ENCODE measurements at regions of chrX and their contacts with region 1.

Region 1: DNA sequence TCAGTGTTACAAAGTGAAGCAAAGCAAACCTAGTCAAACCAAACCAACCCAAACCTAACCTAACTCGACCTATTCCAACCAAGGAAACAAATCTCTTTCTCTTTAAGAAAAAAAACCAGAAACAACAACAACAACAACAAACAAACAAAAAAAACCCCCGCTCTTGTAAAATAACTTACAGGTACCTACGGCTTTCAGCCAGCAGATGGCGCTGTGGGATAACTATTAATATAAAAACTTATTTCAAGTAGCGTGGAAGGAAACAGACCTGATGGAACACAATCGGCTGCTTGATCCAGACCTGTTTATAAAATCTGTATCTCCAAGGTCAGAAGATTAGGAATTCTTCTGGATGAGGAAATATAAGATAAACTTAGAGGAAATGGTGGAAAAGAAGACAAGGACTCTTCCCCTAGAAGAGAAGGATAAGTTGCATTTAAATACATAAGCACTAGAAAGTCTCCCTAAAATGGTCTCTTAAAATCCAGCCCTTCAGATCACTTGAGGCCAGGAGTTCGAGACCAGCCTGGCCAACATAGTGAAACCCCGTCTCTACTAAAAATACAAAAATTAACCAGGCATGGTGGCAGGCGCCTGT is 34.4 kb upstream of the CDKL5 start:
- DNase-seq: peak; percentile 14
- ATAC-seq: peak; percentile 37
- H3K4me3 Mint-ChIP-seq: no peak overlapping the region
- H3K27ac Mint-ChIP-seq: no peak overlapping the region
- H3K4me1 Mint-ChIP-seq: no peaks in the 10 kb centered on the region
- H3K27me3 Mint-ChIP-seq: no peaks in the 10 kb centered on the region
- CTCF ChIP-seq: no peak

Region 2: DNA sequence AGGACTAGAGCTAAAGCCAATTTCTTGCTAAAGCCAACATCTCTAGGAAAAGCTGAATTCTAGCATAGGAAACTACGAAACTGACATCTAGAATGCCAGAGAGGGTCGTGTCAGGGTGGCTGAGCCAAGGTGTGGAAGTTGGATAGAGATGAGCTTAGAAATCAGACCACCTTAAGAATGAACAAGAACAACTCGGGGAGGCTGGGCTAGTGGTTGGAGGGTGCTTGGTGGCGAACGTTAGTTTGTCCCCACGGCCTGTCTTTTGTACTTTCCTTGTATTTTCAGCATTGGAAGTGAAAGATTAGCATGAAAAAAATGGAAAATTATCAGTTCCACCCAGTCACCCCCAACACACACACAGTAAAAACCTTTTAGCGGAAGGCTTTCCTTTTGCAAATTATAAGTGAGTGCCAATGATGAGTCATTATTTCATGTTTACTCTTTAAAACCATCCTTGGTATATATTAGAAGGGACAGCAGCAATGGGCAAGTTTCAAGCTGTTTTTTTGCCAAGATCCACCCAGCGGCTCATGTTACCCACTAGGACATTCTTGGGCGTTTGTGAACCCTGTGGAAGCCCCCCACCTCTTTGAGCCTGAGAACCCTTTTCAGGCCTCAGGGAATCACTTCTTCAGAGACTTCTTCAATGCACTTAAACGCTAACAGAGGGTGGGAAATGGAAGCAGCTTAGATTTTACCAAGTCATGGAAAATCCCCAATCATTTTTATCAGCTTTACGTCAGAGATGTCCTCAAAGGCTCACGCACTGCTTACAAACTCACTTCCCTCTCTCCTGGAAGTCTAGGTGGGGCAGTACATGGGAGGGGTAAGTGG is 311.5 kb after region 1 on chrX:
- CTCF ChIA-PET with region 1: no interaction called
- POLR2A ChIA-PET with region 1: no interaction called
- intact Hi-C with region 1: no loop called
- DNase-seq: no peak
- ATAC-seq: no peak
- H3K4me3 Mint-ChIP-seq: no peak overlapping the region
- H3K27ac Mint-ChIP-seq: no peak overlapping the region
- H3K4me1 Mint-ChIP-seq: no peaks in the 10 kb centered on the region
- H3K27me3 Mint-ChIP-seq: peaks cover 4% of the 10 kb centered on the region
- CTCF ChIP-seq: no peak

Region 3: GRCh38 chrX:18899796-18900447 is 508.9 kb after region 1 on chrX:
- CTCF ChIA-PET with region 1: no interaction called
- POLR2A ChIA-PET with region 1: no interaction called
- intact Hi-C with region 1: loop called (anchors 1 kb)
- DNase-seq: no peak
- ATAC-seq: no peak
- H3K4me3 Mint-ChIP-seq: no peak overlapping the region
- H3K27ac Mint-ChIP-seq: no peak overlapping the region
- H3K4me1 Mint-ChIP-seq: no peaks in the 10 kb centered on the region
- H3K27me3 Mint-ChIP-seq: no peaks in the 10 kb centered on the region
- CTCF ChIP-seq: no peak

Region 4: GRCh38 chrX:19334945-19335626 is 944.0 kb after region 1 on chrX:
- CTCF ChIA-PET with region 1: interaction called, 12 read pairs
- POLR2A ChIA-PET with region 1: no interaction called
- intact Hi-C with region 1: loop called (anchors 1 kb)
- DNase-seq: no peak
- ATAC-seq: no peak
- H3K4me3 Mint-ChIP-seq: no peak overlapping the region
- H3K27ac Mint-ChIP-seq: no peak overlapping the region
- H3K4me1 Mint-ChIP-seq: no peaks in the 10 kb centered on the region
- H3K27me3 Mint-ChIP-seq: no peaks in the 10 kb centered on the region
- CTCF ChIP-seq: no peak

Region 5: DNA sequence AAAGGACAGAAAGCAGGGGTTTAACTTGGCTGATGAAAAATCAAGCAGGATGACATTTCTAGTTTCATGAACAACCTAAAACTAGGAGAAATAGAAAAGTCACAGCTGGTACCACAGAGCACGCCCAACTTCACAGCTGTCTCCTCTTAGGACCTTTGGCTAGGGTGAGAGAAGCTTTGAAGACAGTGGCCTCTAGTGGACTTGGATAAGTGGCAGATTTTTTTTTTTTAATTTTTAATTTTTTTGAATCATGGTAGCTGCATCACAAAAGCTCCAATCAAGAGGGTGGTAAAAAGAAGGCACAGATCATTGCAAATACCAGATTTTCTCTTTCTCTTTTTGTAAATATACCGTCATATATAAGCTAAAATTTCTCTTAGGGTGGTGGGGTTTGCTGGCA is 1144.4 kb after region 1 on chrX:
- CTCF ChIA-PET with region 1: no interaction called
- POLR2A ChIA-PET with region 1: no interaction called
- intact Hi-C with region 1: loop called (anchors 5 kb)
- DNase-seq: no peak
- ATAC-seq: no peak
- H3K4me3 Mint-ChIP-seq: no peak overlapping the region
- H3K27ac Mint-ChIP-seq: no peak overlapping the region
- H3K4me1 Mint-ChIP-seq: no peaks in the 10 kb centered on the region
- H3K27me3 Mint-ChIP-seq: no peaks in the 10 kb centered on the region
- CTCF ChIP-seq: no peak